PC-3 (cell line): ENCODE measurements at regions of chr1 and their contacts with region 1.

Region 1: GRCh38 chr1:151443846-151444782 is 15.2 kb downstream of the POGZ start:
- DNase-seq: peak; percentile 98
- ATAC-seq: peak; percentile 94
- H3K4me3 ChIP-seq: no peak overlapping the region
- H3K27ac ChIP-seq: no peak overlapping the region
- H3K4me1 ChIP-seq: peaks cover 11% of the 10 kb centered on the region
- H3K27me3 ChIP-seq: no peaks in the 10 kb centered on the region
- CTCF ChIP-seq: peak; percentile 95

Region 2: GRCh38 chr1:151459331-151460046 is 15.4 kb after region 1 on chr1 and contains the start of gene POGZ:
- CTCF ChIA-PET with region 1: no interaction called
- POLR2A ChIA-PET with region 1: no interaction called
- intact Hi-C with region 1: loop called (anchors 1 kb)
- DNase-seq: peak; percentile 97
- ATAC-seq: peak; percentile 81
- H3K4me3 ChIP-seq: peak within 1 kb of the TSS; percentile 100
- H3K27ac ChIP-seq: peak within 1 kb of the TSS; percentile 79
- H3K4me1 ChIP-seq: peaks cover 12% of the 10 kb centered on the region
- H3K27me3 ChIP-seq: no peaks in the 10 kb centered on the region
- CTCF ChIP-seq: no peak
- total RNA-seq, gene POGZ: 30.5 and 77.9 TPM in 2 replicates

Region 3: DNA sequence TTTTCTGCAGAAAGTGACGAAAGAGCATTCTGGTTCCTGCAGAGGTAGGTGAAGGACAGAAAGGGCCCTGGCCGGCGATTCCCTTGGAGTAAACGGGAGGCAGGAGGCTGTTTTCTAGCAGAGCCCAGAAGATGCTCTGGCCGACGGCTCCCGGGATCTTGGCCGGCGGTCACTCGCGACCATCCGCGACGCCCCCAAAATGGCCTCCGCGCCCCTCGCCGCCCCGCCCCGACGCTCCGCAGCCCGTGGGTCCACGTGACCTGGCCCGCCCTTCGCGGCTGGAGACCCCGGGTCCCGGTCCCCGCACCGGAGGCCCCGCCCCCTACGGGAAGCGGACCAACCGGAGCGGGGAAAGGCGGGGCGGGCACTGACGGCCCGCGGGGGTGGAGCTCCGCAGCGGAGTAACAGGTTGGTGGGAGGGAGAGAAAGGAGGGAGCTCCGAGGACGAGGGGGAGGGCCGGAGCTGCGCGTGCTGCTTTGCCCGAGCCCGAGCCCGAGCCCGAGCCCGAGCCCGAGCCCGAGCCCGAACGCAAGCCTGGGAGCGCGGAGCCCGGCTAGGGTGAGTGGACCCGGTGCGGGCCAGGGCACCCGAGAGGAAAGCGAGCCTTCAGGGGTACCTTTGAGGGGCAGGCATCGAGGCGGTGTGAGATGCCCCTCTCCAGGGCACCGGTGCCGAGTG is 67.0 kb after region 1 on chr1 and contains the start of gene CGN:
- CTCF ChIA-PET with region 1: interaction called, 5 read pairs
- POLR2A ChIA-PET with region 1: interaction called, 16 read pairs
- intact Hi-C with region 1: loop called (anchors 1 kb)
- DNase-seq: peak; percentile 95
- ATAC-seq: peak; percentile 80
- H3K4me3 ChIP-seq: peak within 1 kb of the TSS; percentile 84
- H3K27ac ChIP-seq: peak within 1 kb of the TSS; percentile 96
- H3K4me1 ChIP-seq: peaks cover 50% of the 10 kb centered on the region
- H3K27me3 ChIP-seq: no peaks in the 10 kb centered on the region
- CTCF ChIP-seq: no peak
- total RNA-seq, gene CGN: 13.3 and 20.1 TPM in 2 replicates

Region 4: DNA sequence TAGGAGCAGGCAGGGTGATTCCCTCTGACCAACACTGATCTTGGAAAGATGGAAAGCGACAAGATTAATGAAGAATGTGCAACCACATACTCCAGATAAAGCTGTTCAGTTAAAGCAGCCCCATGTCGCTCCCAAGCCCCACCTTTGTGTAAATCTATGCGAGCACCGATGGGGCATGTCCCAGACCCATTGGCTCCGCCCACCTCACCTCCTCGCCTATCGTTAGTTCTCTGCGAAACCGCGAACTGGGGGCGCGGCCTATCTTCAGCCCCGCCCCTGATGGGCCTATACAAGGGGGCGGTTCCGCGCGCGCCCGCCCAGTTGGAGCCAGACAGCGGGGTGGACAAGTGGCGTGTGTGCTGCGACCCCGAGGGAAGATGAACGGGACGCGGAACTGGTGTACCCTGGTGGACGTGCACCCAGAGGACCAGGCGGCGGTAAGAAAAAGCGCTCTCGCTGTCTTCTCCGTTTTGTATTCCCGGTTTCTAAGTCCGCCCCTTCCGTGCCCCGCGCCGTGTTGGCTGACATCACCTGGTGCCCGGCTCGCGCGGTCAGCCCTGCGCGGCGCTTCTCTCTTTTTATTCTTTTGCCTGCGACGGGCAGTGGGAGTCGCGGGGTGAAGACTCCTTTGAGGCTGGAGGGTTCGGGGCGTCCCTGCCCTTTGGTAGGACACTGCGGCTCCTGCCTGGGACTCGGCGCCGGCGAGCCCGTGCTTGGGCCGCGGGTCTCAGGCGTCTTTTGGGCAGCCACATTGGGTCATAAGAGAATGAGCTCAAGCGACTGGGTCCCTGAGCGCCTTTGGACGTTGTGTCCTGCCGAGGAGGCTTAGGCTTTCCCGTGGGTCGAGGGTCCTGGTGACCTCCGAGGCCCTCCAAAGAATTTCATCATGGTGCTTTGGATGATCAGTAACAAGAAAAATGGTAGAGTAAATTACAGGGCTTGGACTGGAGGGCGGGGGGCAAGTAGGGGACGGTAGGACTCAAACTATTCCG is 96.2 kb after region 1 on chr1 and contains the start of gene TUFT1:
- CTCF ChIA-PET with region 1: no interaction called
- POLR2A ChIA-PET with region 1: no interaction called
- intact Hi-C with region 1: loop called (anchors 2 kb)
- DNase-seq: peak; percentile 97
- ATAC-seq: peak; percentile 77
- H3K4me3 ChIP-seq: peak within 1 kb of the TSS; percentile 81
- H3K27ac ChIP-seq: peak within 1 kb of the TSS; percentile 86
- H3K4me1 ChIP-seq: peaks cover 61% of the 10 kb centered on the region
- H3K27me3 ChIP-seq: no peaks in the 10 kb centered on the region
- CTCF ChIP-seq: no peak
- total RNA-seq, gene TUFT1: 33.9 and 46.9 TPM in 2 replicates

Region 5: DNA sequence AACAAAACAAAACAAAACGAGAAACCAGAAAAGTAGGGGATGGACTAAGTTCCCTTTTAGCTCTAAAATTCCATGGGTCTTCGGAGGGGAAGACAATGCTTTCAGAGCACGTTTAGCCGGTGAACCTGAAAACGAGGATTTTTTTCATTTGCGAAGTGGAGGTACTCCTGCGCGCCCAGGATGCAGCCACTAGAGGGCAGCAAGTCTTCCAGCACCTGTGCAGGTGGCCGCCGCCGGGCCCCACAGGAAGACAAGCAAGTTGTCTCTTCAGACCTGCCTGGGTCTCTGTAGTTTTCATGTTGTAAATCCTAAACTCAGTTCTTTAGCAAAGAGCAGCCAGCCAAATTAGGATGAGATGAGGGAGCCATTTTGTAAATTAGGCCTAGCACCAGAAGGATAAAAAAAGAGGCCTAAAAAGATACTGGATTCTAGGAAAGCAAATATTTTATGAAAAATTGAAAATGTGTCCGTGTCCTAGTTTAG is 150.1 kb after region 1 on chr1:
- CTCF ChIA-PET with region 1: no interaction called
- POLR2A ChIA-PET with region 1: no interaction called
- intact Hi-C with region 1: loop called (anchors 1 kb)
- DNase-seq: peak; percentile 89
- ATAC-seq: peak; percentile 89
- H3K4me3 ChIP-seq: peak overlapping the region; percentile 27; the same call in 1 of the 2 replicates
- H3K27ac ChIP-seq: no peak overlapping the region
- H3K4me1 ChIP-seq: peaks cover 26% of the 10 kb centered on the region
- H3K27me3 ChIP-seq: no peaks in the 10 kb centered on the region
- CTCF ChIP-seq: peak; percentile 99

Region 6: DNA sequence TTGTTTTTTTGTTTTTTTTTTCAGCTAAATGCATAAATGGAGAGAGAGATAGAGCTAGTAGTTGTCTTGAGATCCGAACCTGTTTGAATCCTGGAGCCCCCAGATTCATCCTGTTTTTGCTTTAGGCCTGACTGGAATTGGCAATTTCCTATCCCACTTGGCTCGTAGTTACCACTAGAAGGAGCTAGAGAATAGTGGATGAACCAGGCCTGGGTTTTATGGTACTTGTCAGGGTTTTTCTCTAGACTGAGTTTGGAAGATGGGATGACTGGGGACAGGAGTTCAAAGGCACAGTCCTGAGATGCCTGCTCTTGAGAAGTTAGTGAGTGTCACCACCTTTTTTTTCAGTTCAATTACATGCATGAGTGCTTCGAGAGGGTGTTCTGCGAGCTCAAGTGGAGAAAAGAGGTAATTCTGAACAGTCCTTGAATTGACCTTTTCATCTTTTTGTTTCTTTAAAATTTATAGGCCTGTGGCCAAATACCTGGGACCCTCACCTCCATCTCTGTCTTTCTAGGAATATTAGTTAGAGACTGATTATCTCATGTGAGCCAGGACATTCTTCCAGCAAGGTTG is 249.1 kb after region 1 on chr1:
- CTCF ChIA-PET with region 1: no interaction called
- POLR2A ChIA-PET with region 1: no interaction called
- intact Hi-C with region 1: loop called (anchors 5 kb)
- DNase-seq: peak; percentile 72
- ATAC-seq: peak; percentile 79
- H3K4me3 ChIP-seq: no peak overlapping the region
- H3K27ac ChIP-seq: no peak overlapping the region
- H3K4me1 ChIP-seq: no peaks in the 10 kb centered on the region
- H3K27me3 ChIP-seq: no peaks in the 10 kb centered on the region
- CTCF ChIP-seq: peak; percentile 97

Region 7: DNA sequence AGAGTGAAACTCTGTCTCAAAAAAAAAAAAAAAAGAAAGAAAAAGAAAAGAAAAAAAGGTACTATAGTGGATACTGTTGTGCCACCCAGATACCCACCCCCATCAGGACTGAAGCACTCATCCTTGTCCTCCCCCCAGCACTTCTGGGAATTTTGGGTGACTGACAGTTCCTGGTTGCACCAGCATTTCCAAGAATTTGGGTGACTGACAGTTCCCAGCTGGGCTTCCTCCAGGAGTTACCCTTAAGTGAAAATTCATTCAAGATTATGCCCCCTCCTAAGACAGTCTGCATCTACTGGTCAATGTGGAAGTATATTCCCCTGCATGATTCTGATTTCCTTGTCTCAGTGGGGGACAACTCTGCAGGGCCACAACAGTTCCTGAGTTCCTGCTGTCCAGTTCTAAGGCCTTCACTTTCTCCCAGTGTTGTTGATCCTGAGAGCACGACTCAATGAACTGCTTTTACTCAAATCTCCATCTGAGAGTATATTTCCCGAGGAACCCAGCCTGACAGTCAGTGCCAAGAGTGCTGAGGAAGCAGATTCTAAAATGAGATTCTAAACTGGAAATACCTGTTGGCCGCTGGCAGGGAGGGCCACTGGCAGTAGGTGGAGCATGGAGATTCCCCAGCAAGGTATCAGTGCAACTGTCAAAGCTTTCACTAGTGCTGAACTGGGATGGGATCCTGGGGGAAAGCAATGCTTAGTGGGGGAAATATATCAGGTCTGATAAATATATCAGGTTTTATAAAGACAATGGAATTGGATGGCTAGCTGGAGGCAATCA is 295.7 kb after region 1 on chr1:
- CTCF ChIA-PET with region 1: interaction called, 3 read pairs
- POLR2A ChIA-PET with region 1: no interaction called
- intact Hi-C with region 1: loop called (anchors 1 kb)
- DNase-seq: peak; percentile 91
- ATAC-seq: peak; percentile 59
- H3K4me3 ChIP-seq: peak overlapping the region; percentile 40; the same call in 1 of the 2 replicates
- H3K27ac ChIP-seq: no peak overlapping the region
- H3K4me1 ChIP-seq: peaks cover 9% of the 10 kb centered on the region
- H3K27me3 ChIP-seq: no peaks in the 10 kb centered on the region
- CTCF ChIP-seq: peak; percentile 43